ENCODE measurements at regions of chr10 and their contacts with region 1.

Region 1: DNA sequence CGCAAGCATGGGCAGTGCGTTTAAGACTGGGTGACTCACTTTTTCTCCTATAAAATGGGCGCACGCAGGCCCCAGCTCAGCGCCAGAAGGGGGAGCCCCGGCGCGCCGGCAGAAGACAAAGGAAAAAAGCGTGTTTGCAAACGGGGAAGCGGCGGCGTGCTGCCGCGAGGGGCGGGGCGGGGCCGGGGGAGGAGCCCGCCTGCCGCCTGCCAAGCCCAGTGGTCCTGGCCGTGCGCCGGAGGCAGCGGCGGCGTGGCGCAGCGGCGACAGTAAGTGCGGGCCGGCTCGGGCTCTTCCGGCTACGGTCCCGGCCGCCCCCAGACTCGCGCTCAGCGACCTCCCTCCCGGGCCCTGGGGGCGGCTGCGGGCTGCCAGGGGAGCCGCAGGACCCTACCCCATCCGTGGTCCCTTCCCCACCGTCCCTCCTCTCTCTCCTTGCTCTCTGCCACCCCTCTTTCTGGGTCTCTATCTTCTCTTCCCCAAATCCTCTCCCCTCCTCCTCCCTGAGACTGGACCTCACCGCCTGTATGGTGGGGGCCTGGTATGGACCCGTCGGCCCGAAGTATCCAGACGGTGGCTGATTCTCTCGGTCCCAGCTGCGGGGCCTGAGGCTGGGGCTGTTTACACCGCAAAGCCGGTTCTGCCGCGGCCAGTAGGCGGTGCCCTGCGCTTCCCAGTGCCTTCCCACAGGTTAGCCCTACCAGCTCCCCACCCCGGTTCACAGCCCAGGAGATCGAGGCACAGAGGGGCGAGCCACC is at the start of gene SLC29A3:
- DNase-seq: peak; percentile 84 to 94 (median 93)
- ATAC-seq: peak; percentile 93
- H3K4me3 ChIP-seq: peak within 1 kb of the TSS; percentile 82
- H3K27ac ChIP-seq: peak within 1 kb of the TSS; percentile 22
- H3K4me1 ChIP-seq: no peaks in the 10 kb centered on the region
- H3K27me3 ChIP-seq: no peaks in the 10 kb centered on the region
- total RNA-seq, gene SLC29A3: 2.2 to 2.7 (median 2.4) TPM

Region 2: GRCh38 chr10:71150796-71151195 is 168.4 kb before region 1 on chr10:
- intact Hi-C with region 1: no loop called
- DNase-seq: no peak
- ATAC-seq: no peak
- H3K4me3 ChIP-seq: no peak overlapping the region
- H3K27ac ChIP-seq: no peak overlapping the region
- H3K4me1 ChIP-seq: no peaks in the 10 kb centered on the region
- H3K27me3 ChIP-seq: no peaks in the 10 kb centered on the region

Region 3: GRCh38 chr10:71371750-71372166 is 52.5 kb after region 1 on chr10:
- intact Hi-C with region 1: loop called in 2 of 4 experiments (anchors 5 to 10 kb)
- DNase-seq: no peak
- ATAC-seq: no peak
- H3K4me3 ChIP-seq: no peak overlapping the region
- H3K27ac ChIP-seq: no peak overlapping the region
- H3K4me1 ChIP-seq: no peaks in the 10 kb centered on the region
- H3K27me3 ChIP-seq: no peaks in the 10 kb centered on the region

Region 4: GRCh38 chr10:71378336-71379117 is 59.3 kb after region 1 on chr10:
- intact Hi-C with region 1: loop called in 2 of 4 experiments (anchors 5 to 10 kb)
- DNase-seq: no peak
- ATAC-seq: no peak
- H3K4me3 ChIP-seq: no peak overlapping the region
- H3K27ac ChIP-seq: no peak overlapping the region
- H3K4me1 ChIP-seq: no peaks in the 10 kb centered on the region
- H3K27me3 ChIP-seq: no peaks in the 10 kb centered on the region

Region 5: GRCh38 chr10:71569775-71570588 is 250.8 kb after region 1 on chr10:
- intact Hi-C with region 1: loop called in 3 of 4 experiments (anchors 10 kb)
- DNase-seq: peak; percentile 65 to 87 (median 77)
- ATAC-seq: peak; percentile 37 to 64
- H3K4me3 ChIP-seq: no peak overlapping the region
- H3K27ac ChIP-seq: no peak overlapping the region
- H3K4me1 ChIP-seq: no peaks in the 10 kb centered on the region
- H3K27me3 ChIP-seq: no peaks in the 10 kb centered on the region

Region 6: GRCh38 chr10:71608819-71609768 is 289.9 kb after region 1 on chr10:
- intact Hi-C with region 1: loop called in 1 of 4 experiments (anchors 10 kb)
- DNase-seq: peak; percentile 82 to 94 (median 92)
- ATAC-seq: peak; percentile 22 to 45
- H3K4me3 ChIP-seq: no peak overlapping the region
- H3K27ac ChIP-seq: no peak overlapping the region
- H3K4me1 ChIP-seq: peaks cover 7% of the 10 kb centered on the region
- H3K27me3 ChIP-seq: no peaks in the 10 kb centered on the region

Region 7: DNA sequence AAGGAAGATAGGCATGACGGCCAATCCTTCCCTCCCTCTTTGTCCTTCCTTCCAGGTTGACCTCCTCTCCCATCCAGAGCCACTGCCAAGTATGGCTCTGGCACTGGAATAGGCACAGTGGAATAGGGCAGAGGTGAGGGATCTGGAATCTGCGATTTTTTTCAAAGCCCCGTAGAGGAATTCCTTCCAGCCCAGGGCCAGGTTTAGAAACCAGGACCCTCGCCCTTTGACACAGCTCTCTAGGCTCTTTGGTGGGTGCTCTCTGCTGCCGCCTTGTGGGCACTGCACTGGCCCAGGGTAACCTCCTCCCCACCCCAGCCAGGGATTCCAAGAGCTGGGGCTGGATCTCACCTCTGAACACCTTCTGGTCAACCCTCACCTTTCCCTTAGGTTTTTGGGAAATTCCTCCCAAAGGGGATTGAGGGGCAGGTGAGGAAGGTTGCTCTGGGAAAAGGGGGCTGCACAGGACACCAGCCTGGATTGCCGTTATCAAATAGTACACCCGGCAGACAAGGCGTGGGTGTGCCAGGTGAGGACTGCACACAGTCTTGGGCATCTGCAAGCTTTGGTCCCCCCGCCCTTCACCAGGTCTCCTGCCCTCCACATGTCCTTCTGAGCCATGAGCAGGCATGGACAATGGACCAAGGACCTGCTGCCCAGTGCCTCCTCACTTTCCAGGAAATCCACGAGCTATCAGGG is 377.6 kb after region 1 on chr10:
- intact Hi-C with region 1: loop called in 2 of 4 experiments (anchors 5 to 10 kb)
- DNase-seq: peak; percentile 70 to 89 (median 86)
- ATAC-seq: peak; percentile 55 to 61
- H3K4me3 ChIP-seq: no peak overlapping the region
- H3K27ac ChIP-seq: no peak overlapping the region
- H3K4me1 ChIP-seq: peaks cover 4% of the 10 kb centered on the region
- H3K27me3 ChIP-seq: no peaks in the 10 kb centered on the region

Region 8: GRCh38 chr10:71812016-71812912 is 493.0 kb after region 1 on chr10:
- intact Hi-C with region 1: loop called in 2 of 4 experiments (anchors 5 to 10 kb)
- DNase-seq: peak; percentile 71 to 90 (median 89)
- ATAC-seq: peak; percentile 72 to 81
- H3K4me3 ChIP-seq: no peak overlapping the region
- H3K27ac ChIP-seq: no peak overlapping the region
- H3K4me1 ChIP-seq: peaks cover 2% of the 10 kb centered on the region
- H3K27me3 ChIP-seq: no peaks in the 10 kb centered on the region